IMR-90 (cell line): ENCODE measurements at regions of chr2 and their contacts with region 1.

Region 1: DNA sequence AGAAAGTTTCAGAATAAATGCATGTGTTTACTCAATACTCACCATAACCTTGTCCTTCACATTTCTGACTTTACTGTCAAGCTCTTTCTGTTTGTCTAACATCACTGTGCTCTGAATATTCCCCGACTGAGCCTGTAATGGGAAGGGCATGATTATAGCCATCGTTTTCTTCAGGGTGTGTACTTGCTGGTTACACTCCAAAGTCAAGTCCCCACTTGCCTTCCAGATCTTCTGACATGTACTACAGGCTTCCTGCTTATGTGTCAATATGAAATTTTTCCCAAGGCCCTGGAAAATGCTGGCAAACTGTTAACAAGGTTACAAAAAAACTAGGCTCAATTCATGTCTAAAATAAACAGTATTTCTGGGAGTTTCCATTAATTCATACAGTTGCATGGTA is 12.9 kb downstream of the STAT1 start:
- DNase-seq: no peak
- ATAC-seq: no peak
- H3K4me3 ChIP-seq: no peak overlapping the region
- H3K27ac ChIP-seq: no peak overlapping the region
- H3K4me1 ChIP-seq: no peaks in the 10 kb centered on the region
- H3K27me3 ChIP-seq: no peaks in the 10 kb centered on the region
- CTCF ChIP-seq: no peak
- POLR2A ChIP-seq: no peak
- RAD21 ChIP-seq: no peak

Region 2: GRCh38 chr2:190311893-190312634 is 689.0 kb before region 1 on chr2:
- CTCF ChIA-PET with region 1: no interaction called
- POLR2A ChIA-PET with region 1: no interaction called
- dilution Hi-C with region 1: no loop called
- in situ Hi-C with region 1: no loop called
- intact Hi-C with region 1: no loop called
- DNase-seq: no peak
- ATAC-seq: no peak
- H3K4me3 ChIP-seq: no peak overlapping the region
- H3K27ac ChIP-seq: no peak overlapping the region
- H3K4me1 ChIP-seq: peaks cover 3% of the 10 kb centered on the region; the same call in 1 of the 2 replicates
- H3K27me3 ChIP-seq: no peaks in the 10 kb centered on the region
- CTCF ChIP-seq: no peak
- POLR2A ChIP-seq: no peak
- RAD21 ChIP-seq: no peak

Region 3: DNA sequence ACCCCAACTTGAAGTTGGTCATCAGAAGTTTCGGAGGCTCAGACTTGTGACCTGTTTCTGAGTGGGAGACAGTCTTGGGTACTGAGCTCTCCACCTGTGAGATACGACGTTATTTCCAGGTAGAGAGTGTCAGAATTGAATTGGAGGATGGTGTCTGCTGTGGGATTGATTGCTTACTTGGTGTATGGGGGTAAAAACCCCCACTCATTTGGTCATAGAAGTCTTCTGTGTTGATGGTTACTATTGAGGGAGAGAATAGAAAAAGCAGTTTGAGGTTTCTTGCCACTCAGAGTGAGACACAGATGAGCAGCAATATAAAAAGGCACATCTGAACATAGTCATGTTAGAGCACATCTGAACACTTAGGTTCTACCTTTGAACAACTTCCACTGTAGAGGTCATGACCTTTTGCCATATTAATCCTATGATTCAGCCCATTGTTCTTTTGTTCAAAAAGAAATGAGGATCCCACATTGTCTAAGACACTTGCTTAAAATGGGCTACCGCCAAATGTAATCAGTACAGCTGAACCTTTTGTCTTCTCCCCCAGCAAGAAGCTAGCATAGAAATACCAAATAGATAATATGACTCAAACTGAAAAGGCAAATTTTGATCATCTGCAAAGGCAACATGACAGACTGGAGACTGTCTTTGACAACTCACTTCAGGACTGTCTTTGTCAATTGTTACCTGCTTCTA is 278.8 kb before region 1 on chr2:
- CTCF ChIA-PET with region 1: no interaction called
- POLR2A ChIA-PET with region 1: no interaction called
- dilution Hi-C with region 1: no loop called
- in situ Hi-C with region 1: no loop called
- intact Hi-C with region 1: no loop called
- DNase-seq: no peak
- ATAC-seq: no peak
- H3K4me3 ChIP-seq: no peak overlapping the region
- H3K27ac ChIP-seq: no peak overlapping the region
- H3K4me1 ChIP-seq: peaks cover 2% of the 10 kb centered on the region; the same call in 1 of the 2 replicates
- H3K27me3 ChIP-seq: peaks cover 3% of the 10 kb centered on the region; the same call in 1 of the 2 replicates
- CTCF ChIP-seq: no peak
- POLR2A ChIP-seq: no peak
- RAD21 ChIP-seq: no peak

Region 4: DNA sequence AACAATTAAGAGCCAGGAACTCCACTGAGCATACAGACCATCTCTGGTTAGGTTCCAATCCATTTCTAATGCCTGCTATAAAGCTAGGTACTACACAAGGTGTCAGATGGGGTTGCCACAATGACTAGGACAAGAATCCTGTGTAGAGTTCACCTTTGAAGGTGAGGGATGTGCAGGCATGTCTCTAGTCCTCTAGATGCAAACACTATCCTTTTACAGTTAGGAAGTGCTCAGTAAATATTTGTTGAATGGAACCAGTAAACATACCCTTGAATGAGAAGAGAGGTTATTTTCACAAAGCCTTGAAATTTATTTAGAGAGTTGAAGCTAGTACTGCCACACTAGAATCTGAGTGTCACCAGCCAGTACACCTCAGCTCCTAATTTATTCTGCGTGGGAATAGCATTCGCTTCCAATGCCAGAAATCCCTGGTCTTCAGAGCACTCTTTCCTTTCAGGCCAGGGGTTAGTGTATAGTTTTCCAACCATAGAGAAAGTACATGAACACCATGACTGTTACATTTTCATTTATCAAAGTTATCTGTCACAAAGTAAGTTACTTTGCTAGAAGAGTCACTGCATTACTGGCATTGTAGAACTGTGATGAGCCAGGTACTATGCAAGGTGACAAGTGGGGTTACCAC is 35.3 kb before region 1 on chr2:
- CTCF ChIA-PET with region 1: no interaction called
- POLR2A ChIA-PET with region 1: no interaction called
- dilution Hi-C with region 1: no loop called
- in situ Hi-C with region 1: no loop called
- intact Hi-C with region 1: loop called (anchors 5 kb)
- DNase-seq: no peak
- ATAC-seq: no peak
- H3K4me3 ChIP-seq: no peak overlapping the region
- H3K27ac ChIP-seq: no peak overlapping the region
- H3K4me1 ChIP-seq: no peaks in the 10 kb centered on the region
- H3K27me3 ChIP-seq: no peaks in the 10 kb centered on the region
- CTCF ChIP-seq: no peak
- POLR2A ChIP-seq: no peak
- RAD21 ChIP-seq: no peak

Region 5: DNA sequence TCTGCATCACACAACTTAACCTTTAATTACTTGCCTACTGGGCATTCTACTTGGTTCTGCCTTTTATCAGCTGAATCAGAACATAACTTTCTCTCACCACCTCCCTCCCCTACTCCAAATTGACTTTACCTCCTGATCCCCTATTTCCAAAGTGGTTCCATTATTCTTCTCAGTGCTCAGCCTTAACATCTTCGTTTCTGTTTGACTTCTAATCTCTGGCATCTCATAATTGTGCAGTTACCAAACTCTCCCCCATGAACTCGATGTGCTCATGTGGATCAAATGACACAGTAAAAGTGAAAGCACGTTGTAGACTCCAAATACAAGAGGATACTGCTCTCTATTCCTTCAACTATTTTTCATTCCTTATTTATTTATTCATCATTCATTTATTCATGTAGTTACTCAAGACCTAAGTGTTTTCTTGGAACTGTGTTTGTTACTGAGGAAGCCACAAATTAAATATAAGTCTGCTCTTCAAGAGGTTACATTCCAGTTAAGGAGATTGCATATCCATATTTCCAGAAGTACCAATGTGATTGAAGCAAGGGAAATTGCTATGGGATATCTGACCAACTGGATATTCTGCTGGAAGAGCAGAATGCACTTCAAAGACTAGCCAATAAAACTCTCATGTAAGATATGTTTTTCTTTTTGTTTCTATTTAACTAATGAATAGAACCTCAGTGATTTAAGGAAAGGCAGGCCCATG is 1034.9 kb after region 1 on chr2:
- CTCF ChIA-PET with region 1: no interaction called
- POLR2A ChIA-PET with region 1: no interaction called
- dilution Hi-C with region 1: no loop called
- in situ Hi-C with region 1: no loop called
- intact Hi-C with region 1: no loop called
- DNase-seq: peak; percentile 76
- ATAC-seq: peak; percentile 97
- H3K4me3 ChIP-seq: peak overlapping the region; percentile 32; the same call in 1 of the 2 replicates
- H3K27ac ChIP-seq: peak overlapping the region; percentile 47; the same call in 1 of the 2 replicates
- H3K4me1 ChIP-seq: peaks cover 2% of the 10 kb centered on the region; the same call in 1 of the 2 replicates
- H3K27me3 ChIP-seq: no peaks in the 10 kb centered on the region
- CTCF ChIP-seq: no peak
- POLR2A ChIP-seq: no peak
- RAD21 ChIP-seq: no peak